ENCODE measurements at regions of chr16 and their contacts with region 1.

Region 1: GRCh38 chr16:54053891-54054820 is 232.4 kb downstream of the IRX3 start:
- DNase-seq: no peak
- ATAC-seq: no peak
- H3K4me3 ChIP-seq: no peak overlapping the region
- H3K27ac ChIP-seq: no peak overlapping the region
- H3K4me1 ChIP-seq: no peaks in the 10 kb centered on the region
- H3K27me3 ChIP-seq: no peaks in the 10 kb centered on the region
- CTCF ChIP-seq: no peak

Region 2: GRCh38 chr16:54015147-54015546 is 39.0 kb before region 1 on chr16:
- CTCF ChIA-PET with region 1: no interaction called
- POLR2A ChIA-PET with region 1: no interaction called
- in situ Hi-C with region 1: no loop called
- intact Hi-C with region 1: no loop called
- DNase-seq: no peak
- ATAC-seq: no peak
- H3K4me3 ChIP-seq: no peak overlapping the region
- H3K27ac ChIP-seq: no peak overlapping the region
- H3K4me1 ChIP-seq: no peaks in the 10 kb centered on the region
- H3K27me3 ChIP-seq: no peaks in the 10 kb centered on the region
- CTCF ChIP-seq: no peak

Region 3: DNA sequence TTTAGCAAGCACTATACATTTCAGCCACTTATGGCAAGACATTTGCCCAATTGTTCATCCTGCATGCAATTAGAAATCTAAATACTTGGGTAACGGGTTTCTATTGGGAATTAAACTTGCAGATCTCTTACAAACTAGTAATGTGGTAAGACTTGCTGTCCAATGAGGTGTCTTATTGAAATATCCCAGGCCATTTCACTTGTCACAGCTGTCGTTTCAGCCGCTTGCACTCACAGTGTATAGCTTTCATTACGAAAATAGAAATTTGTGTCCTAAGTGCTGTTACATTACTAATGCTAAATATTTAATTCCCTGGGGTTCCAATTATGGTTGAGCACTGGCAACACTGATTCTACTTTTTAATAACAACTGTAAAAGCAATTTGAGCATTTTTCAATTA is 836.2 kb after region 1 on chr16:
- CTCF ChIA-PET with region 1: no interaction called
- POLR2A ChIA-PET with region 1: interaction called, 13 read pairs
- in situ Hi-C with region 1: no loop called
- intact Hi-C with region 1: no loop called
- DNase-seq: no peak
- ATAC-seq: no peak
- H3K4me3 ChIP-seq: no peak overlapping the region
- H3K27ac ChIP-seq: no peak overlapping the region
- H3K4me1 ChIP-seq: no peaks in the 10 kb centered on the region
- H3K27me3 ChIP-seq: no peaks in the 10 kb centered on the region
- CTCF ChIP-seq: no peak

Measured in Panc1 (cell line).